A673 (cell line): ENCODE measurements at regions of chr10 and their contacts with region 1.

Region 1: DNA sequence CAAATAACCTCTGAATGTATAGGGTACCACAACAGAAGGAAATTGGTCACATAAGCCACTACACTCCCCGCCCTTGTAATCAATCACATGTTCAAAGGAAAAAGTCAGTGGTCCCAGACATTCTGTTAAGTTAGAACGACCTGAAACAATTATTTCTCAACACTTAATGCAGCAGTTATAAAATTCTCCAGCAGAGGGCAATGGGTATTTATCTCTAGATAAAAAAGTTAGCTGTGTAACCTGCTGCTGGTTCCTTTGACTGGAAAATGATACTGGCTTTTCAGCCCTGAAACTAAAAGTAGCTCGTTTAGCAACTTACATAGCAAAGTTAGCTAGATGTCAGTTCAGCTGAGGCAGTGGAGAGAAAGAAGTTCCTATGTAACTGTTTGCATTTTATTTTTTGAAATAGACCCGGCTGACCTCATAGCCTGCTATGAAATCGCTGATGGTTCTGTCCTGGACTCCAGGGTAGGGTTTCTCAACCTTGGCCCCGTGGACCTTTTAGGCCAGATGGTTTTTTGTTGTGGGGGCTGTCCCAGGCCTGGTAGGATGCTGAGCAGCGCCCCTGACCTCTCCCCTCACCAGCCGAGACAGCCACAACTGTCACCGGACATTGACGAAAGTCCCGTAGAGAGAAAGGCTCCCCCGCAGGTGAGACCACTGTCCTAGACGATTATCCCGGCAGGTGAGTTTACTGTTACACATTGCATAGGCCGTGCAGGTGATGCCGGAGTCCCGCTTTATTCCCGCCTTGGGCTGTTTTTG is 40.2 kb upstream of the PROSER2 start:
- DNase-seq: peak; percentile 87
- H3K4me3 ChIP-seq: no peak overlapping the region
- H3K27ac ChIP-seq: no peak overlapping the region
- H3K4me1 ChIP-seq: no peaks in the 10 kb centered on the region
- H3K27me3 ChIP-seq: no peaks in the 10 kb centered on the region
- CTCF ChIP-seq: peak; percentile 84

Region 2: GRCh38 chr10:11986593-11987216 is 203.7 kb after region 1 on chr10:
- CTCF ChIA-PET with region 1: interaction called, 37 read pairs
- POLR2A ChIA-PET with region 1: no interaction called
- intact Hi-C with region 1: loop called (anchors 1 kb)
- DNase-seq: peak; percentile 87
- H3K4me3 ChIP-seq: no peak overlapping the region
- H3K27ac ChIP-seq: no peak overlapping the region
- H3K4me1 ChIP-seq: no peaks in the 10 kb centered on the region
- H3K27me3 ChIP-seq: no peaks in the 10 kb centered on the region
- CTCF ChIP-seq: peak; percentile 92